Body of pancreas (tissue), 4 donors: ENCODE measurements at regions of chr1 and their contacts with region 1.

Region 1: DNA sequence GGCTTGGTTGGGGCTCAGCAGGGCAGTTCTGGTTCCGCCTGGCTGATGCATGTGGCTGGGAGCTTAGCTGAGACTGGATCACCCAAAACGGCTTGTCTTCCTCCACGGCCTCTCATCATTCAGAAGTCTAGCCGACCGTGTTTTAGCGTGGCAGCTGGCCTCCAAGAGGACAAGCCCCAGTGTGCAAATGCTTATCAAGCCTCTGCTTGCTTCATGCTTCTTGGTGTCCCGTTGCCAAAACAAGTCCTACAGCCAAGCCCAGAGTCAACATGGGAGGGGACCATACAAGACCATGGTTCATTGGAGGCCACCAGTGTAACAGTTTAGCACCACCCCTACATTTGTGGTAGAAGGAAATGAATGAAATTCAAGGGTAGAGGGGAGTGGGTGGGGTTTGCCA is 10.5 kb upstream of the KDF1 start:
- DNase-seq: peak in 2 of 4 donors; percentile 13 to 45
- ATAC-seq: no peak
- H3K4me3 ChIP-seq: no peak overlapping the region
- H3K27ac ChIP-seq: no peak overlapping the region
- H3K4me1 ChIP-seq: no peaks in the 10 kb centered on the region
- H3K27me3 ChIP-seq: no peaks in the 10 kb centered on the region
- CTCF ChIP-seq: no peak
- POLR2A ChIP-seq: no peak

Region 2: GRCh38 chr1:26853156-26853555 is 117.7 kb before region 1 on chr1:
- intact Hi-C with region 1: no loop called
- DNase-seq: peak; percentile 88 to 93 (median 90)
- ATAC-seq: peak; percentile 84
- H3K4me3 ChIP-seq: no peak overlapping the region
- H3K27ac ChIP-seq: peak overlapping the region in 2 of 4 donors; percentile 10 to 26
- H3K4me1 ChIP-seq: no peaks in the 10 kb centered on the region
- H3K27me3 ChIP-seq: no peaks in the 10 kb centered on the region
- CTCF ChIP-seq: peak; percentile 74 to 87 (median 82)
- POLR2A ChIP-seq: no peak

Region 3: GRCh38 chr1:27097484-27097917 is 126.7 kb after region 1 on chr1:
- intact Hi-C with region 1: loop called (anchors 10 kb)
- DNase-seq: peak; percentile 78 to 81 (median 80)
- ATAC-seq: peak; percentile 90
- H3K4me3 ChIP-seq: no peak overlapping the region
- H3K27ac ChIP-seq: no peak overlapping the region
- H3K4me1 ChIP-seq: no peaks in the 10 kb centered on the region
- H3K27me3 ChIP-seq: no peaks in the 10 kb centered on the region
- CTCF ChIP-seq: peak; percentile 89 to 97 (median 95)
- POLR2A ChIP-seq: no peak